Esophagus muscularis mucosa (tissue), 4 donors: ENCODE measurements at regions of chr4 and their contacts with region 1.

Region 1: DNA sequence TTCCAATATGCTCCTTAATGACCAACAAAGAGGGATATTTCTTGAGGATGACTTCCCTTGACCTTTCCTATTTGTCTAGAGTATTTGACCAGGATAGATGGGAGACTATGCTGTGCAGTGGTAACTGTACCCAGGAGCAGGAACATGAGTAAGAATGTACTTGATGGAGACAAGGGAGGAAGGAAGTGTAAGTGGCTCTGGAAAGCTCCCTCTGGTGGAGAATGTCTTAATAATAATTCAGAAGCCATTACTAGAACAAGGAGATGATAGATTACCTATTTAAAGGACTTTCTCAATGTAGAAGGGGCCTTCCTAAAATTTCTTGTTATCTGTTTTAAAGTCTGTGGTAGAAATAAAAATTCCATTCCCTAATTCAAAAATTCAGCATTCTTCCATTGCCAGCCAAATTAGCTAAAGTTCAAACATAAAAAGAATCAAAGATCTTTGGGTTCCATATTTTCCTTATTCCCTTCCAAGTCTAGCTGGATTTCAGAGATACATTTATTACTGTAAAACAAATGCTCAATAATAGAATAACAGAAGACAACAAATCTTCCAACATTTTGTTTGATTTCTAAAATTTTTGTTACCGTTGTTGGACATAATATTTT is 83.8 kb downstream of the GRID2 start:
- DNase-seq: no peak
- H3K4me3 ChIP-seq: no peak overlapping the region
- H3K27ac ChIP-seq: no peak overlapping the region
- H3K4me1 ChIP-seq: no peaks in the 10 kb centered on the region
- H3K27me3 ChIP-seq: no peaks in the 10 kb centered on the region
- CTCF ChIP-seq: peak; percentile 8 to 48 (median 47)
- EP300 ChIP-seq: no peak
- POLR2A ChIP-seq: no peak

Region 2: DNA sequence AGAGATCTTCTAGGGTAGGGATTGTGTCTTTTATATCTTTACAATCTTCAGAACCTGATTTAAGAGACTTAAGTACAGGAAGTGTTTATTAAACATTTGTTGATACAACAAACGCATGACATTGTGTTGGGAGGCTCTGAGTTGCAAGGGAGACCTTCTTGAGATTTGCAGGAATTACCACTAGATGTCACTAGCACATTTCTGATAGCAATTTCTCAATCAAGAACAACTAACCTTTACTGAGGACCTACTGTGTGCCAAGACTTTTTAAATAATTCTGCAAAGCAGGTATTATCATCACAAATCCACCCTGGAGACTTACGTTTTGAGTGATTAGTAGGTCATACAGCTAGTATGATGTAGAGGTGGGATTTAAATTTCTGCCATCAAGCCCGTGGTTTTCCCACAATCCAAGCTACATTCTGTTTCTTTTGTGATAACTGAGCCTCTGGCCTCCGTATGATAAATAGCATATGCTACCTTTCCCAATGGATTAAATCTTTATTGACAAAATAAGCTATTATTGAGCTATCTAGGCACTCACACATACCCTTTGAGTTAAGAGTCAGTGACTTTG is 1274.3 kb before region 1 on chr4:
- intact Hi-C with region 1: loop called (anchors 10 kb)
- DNase-seq: no peak
- H3K4me3 ChIP-seq: no peak overlapping the region
- H3K27ac ChIP-seq: no peak overlapping the region
- H3K4me1 ChIP-seq: no peaks in the 10 kb centered on the region
- H3K27me3 ChIP-seq: no peaks in the 10 kb centered on the region
- CTCF ChIP-seq: peak in 1 of 3 experiments; percentile 18
- EP300 ChIP-seq: no peak
- POLR2A ChIP-seq: no peak